Panc1 (cell line): ENCODE measurements at regions of chr16 and their contacts with region 1.

Region 1: DNA sequence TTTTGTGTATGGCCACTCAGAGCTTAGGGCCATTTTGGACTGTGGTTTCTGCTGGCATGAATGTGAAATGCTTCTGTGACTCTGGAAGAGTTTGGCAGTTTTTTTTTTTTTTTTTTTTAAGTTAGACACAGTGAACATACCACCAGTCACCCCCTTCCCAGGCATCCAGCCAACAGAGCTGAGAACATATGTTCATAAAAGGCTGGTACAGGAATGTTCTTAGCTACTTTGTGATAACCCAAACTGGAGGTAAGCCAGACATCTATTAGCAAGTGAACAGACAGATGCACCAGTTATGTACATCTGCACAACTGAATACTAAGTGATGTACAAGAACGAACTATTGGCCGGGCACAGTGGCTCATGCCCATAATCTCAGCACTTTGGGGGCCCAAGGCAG is 92.7 kb downstream of the ABCC1 start:
- DNase-seq: no peak
- ATAC-seq: no peak
- H3K4me3 ChIP-seq: no peak overlapping the region
- H3K27ac ChIP-seq: no peak overlapping the region
- H3K4me1 ChIP-seq: 0 out of 2 replicates have a peak, but pooled peaks cover 2% of the 10 kb centered on the region
- H3K27me3 ChIP-seq: no peaks in the 10 kb centered on the region
- CTCF ChIP-seq: no peak

Region 2: DNA sequence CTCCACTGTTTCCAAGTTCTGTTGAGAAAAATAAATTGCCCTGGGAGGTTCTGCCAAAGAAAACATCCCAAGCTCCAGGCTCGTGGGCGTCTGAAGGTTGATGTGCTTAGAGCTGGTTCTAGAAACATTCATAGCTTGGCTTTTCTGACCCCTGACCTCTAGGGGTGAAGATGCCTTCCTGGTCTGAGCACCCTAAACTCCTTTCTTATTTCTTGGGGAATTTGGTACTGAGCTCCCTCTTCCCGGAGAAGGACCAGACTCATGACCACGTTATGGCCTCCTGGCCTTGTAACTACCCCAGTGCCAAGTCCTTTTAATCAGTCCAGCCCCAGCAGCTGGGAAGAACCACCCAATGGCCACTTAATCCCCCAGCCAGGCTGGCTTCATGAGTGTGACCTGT is 251.6 kb before region 1 on chr16:
- CTCF ChIA-PET with region 1: no interaction called
- POLR2A ChIA-PET with region 1: interaction called, 10 read pairs
- in situ Hi-C with region 1: no loop called
- intact Hi-C with region 1: no loop called
- DNase-seq: no peak
- ATAC-seq: no peak
- H3K4me3 ChIP-seq: no peak overlapping the region
- H3K27ac ChIP-seq: no peak overlapping the region
- H3K4me1 ChIP-seq: peaks cover 12% of the 10 kb centered on the region; the same call in 1 of the 2 replicates
- H3K27me3 ChIP-seq: no peaks in the 10 kb centered on the region
- CTCF ChIP-seq: no peak

Region 3: DNA sequence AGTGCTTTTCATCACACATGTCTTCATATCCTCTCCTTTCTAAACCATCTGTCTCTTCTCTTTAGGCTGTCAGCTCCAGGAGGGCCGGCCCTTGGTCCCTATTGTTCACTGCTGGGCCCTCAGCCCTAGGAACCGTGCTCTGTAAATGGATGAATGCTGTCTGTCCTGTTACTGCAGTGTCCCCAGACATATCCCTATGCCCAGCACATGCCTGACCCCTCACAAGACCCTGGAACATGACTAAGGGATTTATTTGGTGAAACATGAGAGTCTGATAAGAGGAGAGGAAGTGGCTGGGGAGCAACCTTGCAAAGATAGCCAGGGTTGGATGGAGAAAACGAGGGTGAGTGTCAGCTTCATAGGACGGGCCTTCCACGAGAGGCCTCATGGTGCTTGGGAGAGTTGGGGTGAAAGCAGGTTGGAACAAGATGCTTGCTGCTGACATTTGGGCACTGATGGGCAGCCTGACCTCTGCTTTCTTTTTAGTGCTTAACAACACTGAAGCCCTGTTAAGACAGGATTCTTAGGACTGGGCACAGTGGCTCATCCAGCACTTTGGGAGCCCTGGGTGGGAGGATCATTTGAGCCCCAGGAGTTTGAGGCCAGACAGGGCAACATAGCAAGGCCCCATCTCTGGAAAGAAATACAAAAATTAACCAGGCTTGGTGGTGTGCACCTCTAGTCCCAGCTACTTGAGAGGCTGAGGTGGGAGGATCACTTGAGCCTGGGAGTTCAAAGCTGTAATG is 53.6 kb before region 1 on chr16:
- CTCF ChIA-PET with region 1: interaction called, 12 read pairs
- POLR2A ChIA-PET with region 1: no interaction called
- in situ Hi-C with region 1: no loop called
- intact Hi-C with region 1: no loop called
- DNase-seq: no peak
- ATAC-seq: peak; percentile 12
- H3K4me3 ChIP-seq: no peak overlapping the region
- H3K27ac ChIP-seq: peak overlapping the region; percentile 97
- H3K4me1 ChIP-seq: peaks cover 81% of the 10 kb centered on the region
- H3K27me3 ChIP-seq: no peaks in the 10 kb centered on the region
- CTCF ChIP-seq: no peak